HCT116 (cell line): ENCODE measurements at regions of chr14 and their contacts with region 1.

Region 1: GRCh38 chr14:22986508-22987054 is 4.2 kb upstream of the AJUBA start:
- DNase-seq: peak; percentile 81
- ATAC-seq: peak; percentile 47
- H3K4me3 ChIP-seq: no peak overlapping the region
- H3K27ac ChIP-seq: no peak overlapping the region
- H3K4me1 ChIP-seq: peaks cover 2 to 9% of the 10 kb centered on the region in 2 experiments; a peak in 2 of 4 replicates
- H3K27me3 ChIP-seq: no peaks in the 10 kb centered on the region
- CTCF ChIP-seq: peak in 2 of 3 experiments; percentile 89 to 98; a peak in 4 of 6 replicates
- POLR2A ChIP-seq: no peak
- RAD21 ChIP-seq: no peak

Region 2: DNA sequence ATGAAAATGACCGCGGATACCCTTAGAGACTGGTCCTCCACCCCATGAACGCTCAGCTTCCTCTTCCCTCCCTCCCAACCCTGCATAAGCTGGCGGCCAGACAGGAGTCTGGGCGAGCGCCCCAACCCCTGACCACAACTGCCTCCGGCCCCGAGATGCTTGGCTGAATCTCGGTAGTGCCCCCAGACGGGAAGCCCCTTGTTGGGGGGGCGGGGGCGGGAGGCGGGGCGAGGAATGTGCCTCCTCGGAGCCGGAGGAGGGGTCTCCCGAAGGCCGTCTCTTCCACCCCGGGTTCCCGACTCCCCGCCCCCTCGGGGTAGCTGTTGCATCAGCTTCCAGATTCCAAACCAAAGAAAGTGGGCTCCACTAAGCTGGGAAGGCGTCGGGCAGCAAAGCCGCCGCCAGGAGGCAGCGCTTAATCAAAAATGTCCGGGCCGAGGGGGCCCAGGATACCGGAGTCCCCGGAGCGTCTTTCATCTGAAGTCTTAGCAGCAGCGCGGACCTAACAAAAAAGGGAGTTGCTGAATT is 163.9 kb before region 1 on chr14:
- CTCF ChIA-PET with region 1: interaction called, 8 read pairs
- POLR2A ChIA-PET with region 1: no interaction called
- RAD21 ChIA-PET with region 1: interaction called in 1 of 2 experiments, 4 read pairs
- intact Hi-C with region 1: loop called (anchors 2 kb)
- DNase-seq: peak; percentile 51
- ATAC-seq: peak; percentile 86
- H3K4me3 ChIP-seq: peak overlapping the region; percentile 29 to 43
- H3K27ac ChIP-seq: no peak overlapping the region
- H3K4me1 ChIP-seq: peaks cover 7 to 35% of the 10 kb centered on the region in 2 experiments
- H3K27me3 ChIP-seq: no peaks in the 10 kb centered on the region
- CTCF ChIP-seq: peak; percentile 81 to 89 (median 87)
- POLR2A ChIP-seq: no peak
- RAD21 ChIP-seq: peak; percentile 88

Region 3: GRCh38 chr14:22973217-22974032 is 13.2 kb before region 1 on chr14:
- CTCF ChIA-PET with region 1: interaction called, 30 read pairs
- POLR2A ChIA-PET with region 1: interaction called, 3 read pairs
- RAD21 ChIA-PET with region 1: interaction called, 3 read pairs
- intact Hi-C with region 1: loop called (anchors 1 kb)
- DNase-seq: no peak
- ATAC-seq: peak; percentile 64
- H3K4me3 ChIP-seq: no peak overlapping the region
- H3K27ac ChIP-seq: no peak overlapping the region
- H3K4me1 ChIP-seq: peaks cover 36 to 39% of the 10 kb centered on the region in 2 experiments
- H3K27me3 ChIP-seq: no peaks in the 10 kb centered on the region
- CTCF ChIP-seq: peak in 2 of 3 experiments; percentile 61 to 75; a peak in 4 of 6 replicates
- POLR2A ChIP-seq: no peak
- RAD21 ChIP-seq: no peak

Region 4: GRCh38 chr14:23057757-23058653 is 71.4 kb after region 1 on chr14:
- CTCF ChIA-PET with region 1: interaction called, 175 read pairs
- POLR2A ChIA-PET with region 1: interaction called, 10 read pairs
- RAD21 ChIA-PET with region 1: interaction called, 7 to 12 read pairs
- intact Hi-C with region 1: loop called (anchors 1 kb)
- DNase-seq: peak; percentile 79
- ATAC-seq: peak; percentile 73
- H3K4me3 ChIP-seq: peak overlapping the region; percentile 59 to 61
- H3K27ac ChIP-seq: peak overlapping the region; percentile 84
- H3K4me1 ChIP-seq: peaks cover 24 to 44% of the 10 kb centered on the region in 2 experiments
- H3K27me3 ChIP-seq: no peaks in the 10 kb centered on the region
- CTCF ChIP-seq: peak; percentile 83 to 95 (median 92)
- POLR2A ChIP-seq: no peak
- RAD21 ChIP-seq: peak; percentile 87

Region 5: DNA sequence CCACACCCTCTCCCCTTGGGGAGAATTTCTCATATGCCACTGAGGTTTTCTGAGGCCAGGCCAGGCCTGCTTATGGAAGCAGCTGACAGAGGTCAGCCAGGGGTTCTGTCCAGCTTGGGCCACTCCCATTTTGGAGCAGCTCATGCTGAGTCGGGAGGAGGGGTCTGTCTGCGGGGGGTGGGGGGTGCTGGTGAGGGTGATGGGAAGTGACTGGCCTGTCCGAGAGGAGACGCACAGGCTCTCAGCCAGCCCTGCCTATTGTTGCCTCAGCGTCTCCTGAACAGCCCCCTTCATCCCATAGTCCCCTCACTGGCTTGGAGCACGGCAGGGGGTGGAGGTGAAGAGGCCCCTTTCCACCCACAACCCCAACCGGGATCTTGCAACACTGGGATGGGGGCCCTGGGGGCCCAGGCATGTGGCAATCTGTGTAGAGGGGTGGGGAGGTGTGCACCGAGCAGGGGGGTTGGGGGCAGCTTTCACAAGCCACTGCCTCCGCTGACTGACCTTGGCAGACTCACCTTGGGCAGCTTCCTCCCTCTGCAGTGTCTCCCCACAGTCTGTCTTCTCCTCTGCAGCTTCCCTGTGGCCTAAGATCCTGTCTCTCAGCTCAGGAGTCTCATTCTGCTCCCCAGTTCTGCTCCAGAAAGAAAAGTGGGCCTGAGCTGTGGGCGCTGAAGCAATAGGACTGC is 127.0 kb after region 1 on chr14:
- CTCF ChIA-PET with region 1: interaction called, 14 read pairs
- POLR2A ChIA-PET with region 1: no interaction called
- RAD21 ChIA-PET with region 1: no interaction called
- intact Hi-C with region 1: no loop called
- DNase-seq: no peak
- ATAC-seq: no peak
- H3K4me3 ChIP-seq: no peak overlapping the region
- H3K27ac ChIP-seq: no peak overlapping the region
- H3K4me1 ChIP-seq: peaks cover 12 to 23% of the 10 kb centered on the region in 2 experiments
- H3K27me3 ChIP-seq: peaks cover 20% of the 10 kb centered on the region; the same call in 1 of the 2 replicates
- CTCF ChIP-seq: no peak
- POLR2A ChIP-seq: no peak
- RAD21 ChIP-seq: no peak

Region 6: DNA sequence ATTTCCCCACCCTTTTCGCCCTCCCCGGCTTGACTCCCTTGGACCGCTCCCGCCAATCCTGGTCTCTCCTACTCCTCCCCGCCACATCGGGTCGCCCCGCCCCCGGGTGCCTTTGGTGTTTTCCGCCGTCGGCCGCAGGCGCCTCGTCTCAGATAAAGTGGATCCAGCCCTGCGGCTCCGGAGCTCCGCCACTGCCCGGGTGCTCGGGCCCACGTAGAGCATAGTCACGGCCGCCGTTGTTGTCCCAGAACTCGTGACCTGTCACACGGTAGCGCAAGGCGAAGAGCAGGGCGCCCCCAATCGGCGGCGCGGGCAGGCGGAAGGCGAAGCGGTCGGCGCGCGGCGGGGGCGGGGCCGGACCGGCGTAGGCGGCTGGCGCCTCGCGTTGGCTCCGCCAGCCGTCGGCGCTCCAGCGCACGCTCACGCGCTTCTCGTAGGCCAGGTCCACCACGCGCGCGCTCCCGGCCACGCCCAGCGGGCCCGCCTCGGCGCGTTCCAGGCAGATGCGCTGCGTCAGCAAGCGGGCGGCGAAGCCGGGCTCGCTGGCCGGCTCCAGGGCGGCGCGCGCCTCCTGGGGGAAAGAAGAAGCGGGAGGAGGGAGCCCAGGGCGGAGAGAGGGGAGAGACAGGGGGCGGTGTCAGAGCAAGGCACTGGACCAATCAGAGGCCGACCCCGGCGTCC is 314.8 kb after region 1 on chr14:
- CTCF ChIA-PET with region 1: no interaction called
- POLR2A ChIA-PET with region 1: no interaction called
- RAD21 ChIA-PET with region 1: no interaction called
- intact Hi-C with region 1: loop called (anchors 10 kb)
- DNase-seq: peak; percentile 95
- ATAC-seq: peak; percentile 84
- H3K4me3 ChIP-seq: peak overlapping the region; percentile 54 to 64
- H3K27ac ChIP-seq: peak overlapping the region; percentile 96
- H3K4me1 ChIP-seq: peaks cover 18 to 41% of the 10 kb centered on the region in 2 experiments
- H3K27me3 ChIP-seq: no peaks in the 10 kb centered on the region
- CTCF ChIP-seq: peak in 2 of 3 experiments; percentile 69 to 70; a peak in 4 of 6 replicates
- POLR2A ChIP-seq: peak; percentile 33
- RAD21 ChIP-seq: no peak